B cell (primary cell): ENCODE measurements at regions of chr3 and their contacts with region 1.

Region 1: DNA sequence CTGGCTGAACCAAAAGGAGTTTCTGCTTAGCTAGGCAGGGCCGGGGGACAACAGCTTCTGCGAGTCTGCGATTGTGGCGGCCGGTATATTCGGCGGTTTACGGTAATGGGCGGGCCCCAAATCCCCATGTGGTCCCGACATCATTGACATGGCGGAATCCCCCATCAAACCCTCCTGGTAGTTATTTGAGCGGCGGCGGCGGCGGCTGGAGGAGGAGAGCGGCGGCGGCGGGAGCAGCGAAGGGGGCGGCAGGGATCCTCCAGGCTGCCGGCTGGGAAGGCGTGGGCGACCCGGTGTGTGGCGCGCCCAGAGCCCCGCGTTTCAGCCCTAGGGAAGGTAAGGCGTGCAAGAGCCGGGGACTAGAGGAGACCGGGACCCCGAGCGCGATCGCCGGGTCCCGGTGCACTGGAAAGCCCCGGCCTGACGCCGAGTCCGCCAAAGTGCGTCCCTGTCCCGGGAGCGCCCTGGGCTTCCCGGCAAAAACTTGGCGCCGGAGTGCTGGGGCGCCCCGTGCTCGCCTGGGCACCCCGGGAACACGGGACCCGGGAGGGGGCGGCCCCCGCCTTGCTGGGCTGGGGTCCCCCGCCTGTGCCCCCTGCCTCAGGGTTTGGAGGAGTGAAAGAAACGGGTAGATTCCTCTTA is at the start of gene FNDC3B:
- DNase-seq: peak; percentile 95
- ATAC-seq: peak; percentile 92
- H3K4me3 ChIP-seq: peak within 1 kb of the TSS; percentile 50 to 91 (median 85)
- H3K4me3 Mint-ChIP-seq: peak within 1 kb of the TSS; percentile 97
- H3K27ac ChIP-seq: peak within 1 kb of the TSS; percentile 26 to 80
- H3K27ac Mint-ChIP-seq: peak within 1 kb of the TSS; percentile 92
- H3K4me1 ChIP-seq: peaks cover 11% of the 10 kb centered on the region in 2 donors
- H3K4me1 Mint-ChIP-seq: peaks cover 9% of the 10 kb centered on the region
- H3K27me3 ChIP-seq: peaks cover 0 to 18% (median 10%) of the 10 kb centered on the region in 4 experiments
- H3K27me3 Mint-ChIP-seq: peaks cover 24% of the 10 kb centered on the region
- CTCF ChIP-seq: no peak
- total RNA-seq, gene FNDC3B: 9.2 and 9.6 TPM in 2 replicates

Region 2: DNA sequence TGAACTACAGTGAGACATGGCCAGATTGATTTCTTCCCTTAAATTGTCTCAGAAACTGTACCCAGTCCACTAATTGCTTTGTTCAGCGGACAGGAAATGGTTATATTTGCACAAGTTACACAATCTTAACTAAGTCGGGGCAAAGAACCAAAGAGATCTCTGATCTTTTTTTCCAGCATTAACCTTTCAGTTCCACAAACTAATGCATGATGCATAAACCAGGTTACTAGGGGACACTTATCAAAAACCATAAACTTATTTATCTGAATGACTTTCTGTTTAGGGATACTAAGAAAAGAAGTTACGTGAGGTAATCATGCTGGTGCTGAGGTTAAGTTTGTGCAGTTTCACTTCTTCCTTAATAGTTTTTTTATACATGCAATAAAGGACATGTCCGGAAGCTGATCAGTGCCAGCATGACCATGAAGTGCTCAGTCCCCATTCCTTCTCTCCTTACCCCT is 22.2 kb after region 1 on chr3:
- CTCF ChIA-PET with region 1: interaction called, 5 read pairs
- POLR2A ChIA-PET with region 1: no interaction called
- intact Hi-C with region 1: loop called (anchors 1 kb)
- DNase-seq: peak; percentile 71
- ATAC-seq: peak; percentile 94
- H3K4me3 ChIP-seq: peak overlapping the region; percentile 2 to 47 (median 40)
- H3K4me3 Mint-ChIP-seq: peak overlapping the region; percentile 79
- H3K27ac ChIP-seq: no peak overlapping the region
- H3K27ac Mint-ChIP-seq: no peak overlapping the region
- H3K4me1 ChIP-seq: peaks cover 19 to 23% of the 10 kb centered on the region in 2 donors
- H3K4me1 Mint-ChIP-seq: peaks cover 26% of the 10 kb centered on the region
- H3K27me3 ChIP-seq: peaks cover 0 to 31% (median 23%) of the 10 kb centered on the region in 4 experiments
- H3K27me3 Mint-ChIP-seq: peaks cover 26% of the 10 kb centered on the region
- CTCF ChIP-seq: no peak

Region 3: DNA sequence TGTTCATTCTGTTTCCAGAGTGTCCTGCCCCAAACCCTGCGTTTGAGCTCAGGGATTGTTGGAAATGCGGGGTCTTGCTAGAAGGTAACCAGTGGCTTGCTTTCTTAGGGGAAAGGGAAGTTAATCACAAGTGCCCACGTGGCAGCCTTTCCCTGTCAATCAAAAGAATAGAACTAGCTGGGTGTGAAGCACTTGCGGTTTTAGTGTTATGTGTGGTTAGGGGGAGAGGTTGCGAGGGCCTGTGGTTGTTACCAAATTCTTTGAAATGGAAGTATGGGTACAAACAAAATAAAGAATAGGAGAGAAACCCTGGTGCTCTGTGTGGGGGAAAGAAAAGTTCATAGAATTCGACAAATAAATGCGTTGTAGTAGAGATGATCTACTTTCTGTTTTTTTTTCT is 67.4 kb after region 1 on chr3:
- CTCF ChIA-PET with region 1: interaction called, 5 read pairs
- POLR2A ChIA-PET with region 1: no interaction called
- intact Hi-C with region 1: loop called (anchors 1 kb)
- DNase-seq: peak; percentile 75
- ATAC-seq: peak; percentile 73
- H3K4me3 ChIP-seq: peak overlapping the region in 1 of 5 experiments; percentile 31
- H3K4me3 Mint-ChIP-seq: peak overlapping the region; percentile 71
- H3K27ac ChIP-seq: no peak overlapping the region
- H3K27ac Mint-ChIP-seq: peak overlapping the region; percentile 43
- H3K4me1 ChIP-seq: peaks cover 27 to 32% of the 10 kb centered on the region in 2 donors
- H3K4me1 Mint-ChIP-seq: peaks cover 33% of the 10 kb centered on the region
- H3K27me3 ChIP-seq: peaks cover 0 to 57% (median 52%) of the 10 kb centered on the region in 4 experiments
- H3K27me3 Mint-ChIP-seq: peaks cover 71% of the 10 kb centered on the region
- CTCF ChIP-seq: no peak